ENCODE measurements at regions of chr5 and their contacts with region 1.

Region 1: GRCh38 chr5:83076742-83077661 is at the starts of genes TMEM167A and XRCC4:
- DNase-seq: peak; percentile 95
- H3K4me3 Mint-ChIP-seq: peak within 1 kb of the TSS; percentile 98
- H3K27ac Mint-ChIP-seq: peak within 1 kb of the TSS; percentile 96
- H3K4me1 Mint-ChIP-seq: peaks cover 48% of the 10 kb centered on the region
- H3K27me3 Mint-ChIP-seq: no peaks in the 10 kb centered on the region
- total RNA-seq, gene TMEM167A: 58.8 to 64.4 TPM
- total RNA-seq, gene XRCC4: 12.1 to 12.8 TPM

Region 2: DNA sequence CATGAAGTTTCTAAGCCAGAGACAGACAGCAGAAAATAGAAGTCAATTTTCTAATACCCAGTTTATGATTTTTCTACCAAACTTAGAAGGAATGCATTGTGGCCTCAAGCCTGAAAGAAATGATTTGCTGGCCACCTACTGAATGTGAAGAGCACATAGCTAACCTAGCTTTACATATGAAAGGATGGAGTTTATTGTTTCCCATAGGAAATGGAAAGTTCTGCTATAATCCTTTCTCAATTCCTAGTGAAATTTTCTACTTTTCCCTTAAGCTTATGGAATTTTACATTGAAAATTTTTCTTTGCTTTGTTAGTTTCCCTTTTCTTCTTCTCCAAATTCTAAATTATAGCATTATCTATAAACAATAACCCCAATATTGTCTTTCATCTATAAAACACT is 109.9 kb before region 1 on chr5:
- CTCF ChIA-PET with region 1: no interaction called
- intact Hi-C with region 1: loop called (anchors 5 kb)
- DNase-seq: no peak
- H3K4me3 Mint-ChIP-seq: no peak overlapping the region
- H3K27ac Mint-ChIP-seq: no peak overlapping the region
- H3K4me1 Mint-ChIP-seq: peaks cover 9% of the 10 kb centered on the region
- H3K27me3 Mint-ChIP-seq: peaks cover 6% of the 10 kb centered on the region

Region 3: GRCh38 chr5:83430130-83431010 is 353.4 kb after region 1 on chr5:
- CTCF ChIA-PET with region 1: no interaction called
- intact Hi-C with region 1: no loop called
- DNase-seq: peak; percentile 76
- H3K4me3 Mint-ChIP-seq: no peak overlapping the region
- H3K27ac Mint-ChIP-seq: no peak overlapping the region
- H3K4me1 Mint-ChIP-seq: no peaks in the 10 kb centered on the region
- H3K27me3 Mint-ChIP-seq: no peaks in the 10 kb centered on the region

Measured in activated naive CD4-positive, alpha-beta T cell treated with anti-CD3 and anti-CD28 coated beads for 36 hours (primary cell).